ENCODE measurements at regions of chr5 and their contacts with region 1.

Region 1: DNA sequence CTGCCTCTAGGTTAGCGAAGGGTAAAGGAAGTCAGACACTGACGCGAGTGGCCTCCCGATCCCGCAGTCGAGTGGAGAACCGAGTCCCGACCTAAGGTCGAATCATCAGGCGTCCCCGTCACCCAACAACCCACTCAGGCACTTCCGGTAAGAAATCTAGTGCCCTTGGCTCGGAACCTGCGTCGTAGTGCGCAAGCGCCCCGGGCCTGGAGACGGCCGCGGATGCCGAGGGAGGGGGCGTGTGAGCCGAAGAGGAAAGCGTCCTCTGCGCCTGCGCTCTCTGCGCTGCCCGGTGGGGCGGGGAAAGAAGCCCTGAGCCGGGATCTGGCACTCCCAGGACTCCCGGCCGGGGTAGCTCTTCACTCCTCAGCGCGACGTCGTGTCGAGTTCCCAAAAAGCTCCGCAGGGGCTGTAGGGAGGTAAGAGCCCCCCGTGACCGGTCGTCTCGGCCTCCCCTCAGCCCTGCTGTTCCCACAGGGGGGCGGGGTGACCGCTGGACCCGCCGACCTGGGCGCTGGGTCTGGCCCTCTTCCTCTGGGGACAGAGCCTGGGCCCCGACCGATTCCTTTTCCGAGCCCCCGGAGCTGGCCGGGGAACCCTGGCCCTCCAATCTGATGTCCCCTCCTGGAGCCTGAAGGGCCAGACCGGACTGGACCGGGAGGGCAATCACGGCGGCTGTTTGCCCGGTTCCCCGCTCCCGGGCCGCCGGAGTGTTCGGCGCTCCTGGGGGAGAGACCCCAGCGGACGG is at the start of gene ZFYVE16:
- DNase-seq: peak; percentile 95
- ATAC-seq: peak; percentile 88
- H3K4me3 ChIP-seq: peak within 1 kb of the TSS; percentile 82 to 93 (median 89)
- H3K27ac ChIP-seq: peak within 1 kb of the TSS; percentile 94
- H3K4me1 ChIP-seq: peaks cover 28% of the 10 kb centered on the region
- H3K27me3 ChIP-seq: no peaks in the 10 kb centered on the region
- CTCF ChIP-seq: peak; percentile 55
- EP300 ChIP-seq: no peak
- POLR2A ChIP-seq: peak; percentile 87 to 96
- RAD21 ChIP-seq: peak; percentile 23; the same call in 1 of the 2 replicates
- total RNA-seq, gene ZFYVE16: 33.3 and 55.7 TPM in 2 replicates

Region 2: DNA sequence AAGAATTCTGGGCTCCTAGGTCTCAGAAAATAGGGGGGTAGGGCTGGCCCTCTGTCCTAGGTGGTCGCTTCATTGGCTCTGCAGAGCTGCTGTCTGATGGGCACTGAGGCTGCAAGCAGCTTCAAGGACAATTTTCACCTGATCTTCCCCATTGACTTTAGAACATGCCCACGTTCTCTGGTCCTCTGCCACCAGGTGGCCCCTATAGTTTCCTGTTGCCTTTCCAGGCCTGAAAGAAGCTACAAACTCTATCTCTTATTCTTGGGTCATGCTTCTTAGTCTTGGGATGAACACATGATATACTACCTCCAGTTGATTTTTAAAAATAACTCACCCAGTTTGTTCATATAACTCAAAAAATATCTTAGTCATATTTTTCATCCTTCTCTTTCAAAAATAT is 61.9 kb before region 1 on chr5:
- CTCF ChIA-PET with region 1: no interaction called
- POLR2A ChIA-PET with region 1: no interaction called
- in situ Hi-C with region 1: no loop called
- intact Hi-C with region 1: loop called (anchors 10 kb)
- DNase-seq: peak; percentile 44
- ATAC-seq: peak; percentile 90
- H3K4me3 ChIP-seq: no peak overlapping the region
- H3K27ac ChIP-seq: no peak overlapping the region
- H3K4me1 ChIP-seq: peaks cover 11% of the 10 kb centered on the region
- H3K27me3 ChIP-seq: peaks cover 0 to 2% of the 10 kb centered on the region in 2 experiments; a peak in 1 of 5 replicates
- CTCF ChIP-seq: peak; percentile 70
- EP300 ChIP-seq: no peak
- POLR2A ChIP-seq: no peak
- RAD21 ChIP-seq: peak; percentile 11; the same call in 1 of the 2 replicates

Region 3: GRCh38 chr5:80466669-80467485 is 59.0 kb after region 1 on chr5:
- CTCF ChIA-PET with region 1: no interaction called
- POLR2A ChIA-PET with region 1: interaction called, 14 read pairs
- in situ Hi-C with region 1: no loop called
- intact Hi-C with region 1: no loop called
- DNase-seq: peak; percentile 67
- ATAC-seq: peak; percentile 87
- H3K4me3 ChIP-seq: no peak overlapping the region
- H3K27ac ChIP-seq: peak overlapping the region; percentile 62
- H3K4me1 ChIP-seq: peaks cover 26% of the 10 kb centered on the region
- H3K27me3 ChIP-seq: no peaks in the 10 kb centered on the region
- CTCF ChIP-seq: no peak
- EP300 ChIP-seq: no peak
- POLR2A ChIP-seq: no peak
- RAD21 ChIP-seq: no peak

Region 4: GRCh38 chr5:80474929-80475328 is 67.0 kb after region 1 on chr5:
- CTCF ChIA-PET with region 1: no interaction called
- POLR2A ChIA-PET with region 1: no interaction called
- in situ Hi-C with region 1: no loop called
- intact Hi-C with region 1: loop called (anchors 5 kb)
- DNase-seq: peak; percentile 63
- ATAC-seq: peak; percentile 90
- H3K4me3 ChIP-seq: no peak overlapping the region
- H3K27ac ChIP-seq: peak overlapping the region; percentile 45
- H3K4me1 ChIP-seq: peaks cover 14% of the 10 kb centered on the region
- H3K27me3 ChIP-seq: no peaks in the 10 kb centered on the region; a peak in 1 of 5 replicates
- CTCF ChIP-seq: no peak
- EP300 ChIP-seq: peak in 1 of 2 experiments; percentile 30; a peak in 1 of 4 replicates
- POLR2A ChIP-seq: no peak
- RAD21 ChIP-seq: no peak

Region 5: DNA sequence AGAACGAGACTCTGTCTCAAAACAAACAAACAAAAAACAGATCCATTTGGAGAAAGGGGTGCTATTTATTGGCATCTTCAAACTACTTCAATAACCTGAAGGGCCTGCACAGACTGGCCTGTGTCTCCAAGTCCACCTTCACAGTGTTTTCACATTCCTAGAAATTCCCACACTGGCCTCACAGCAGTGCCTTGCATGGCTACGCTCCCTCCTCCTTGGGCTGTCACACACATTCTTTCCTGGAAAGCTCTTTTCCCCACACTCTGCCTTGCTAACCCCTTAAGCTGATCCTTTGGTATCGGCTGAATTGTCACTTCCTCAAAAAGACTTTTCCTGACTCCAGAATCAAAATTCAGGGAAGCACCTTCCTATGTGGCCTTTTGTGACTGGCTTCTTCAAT is 99.8 kb after region 1 on chr5:
- CTCF ChIA-PET with region 1: no interaction called
- POLR2A ChIA-PET with region 1: no interaction called
- in situ Hi-C with region 1: no loop called
- intact Hi-C with region 1: no loop called
- DNase-seq: no peak
- ATAC-seq: no peak
- H3K4me3 ChIP-seq: no peak overlapping the region
- H3K27ac ChIP-seq: no peak overlapping the region
- H3K4me1 ChIP-seq: no peaks in the 10 kb centered on the region
- H3K27me3 ChIP-seq: no peaks in the 10 kb centered on the region
- CTCF ChIP-seq: no peak
- EP300 ChIP-seq: no peak
- POLR2A ChIP-seq: no peak
- RAD21 ChIP-seq: no peak

Region 6: DNA sequence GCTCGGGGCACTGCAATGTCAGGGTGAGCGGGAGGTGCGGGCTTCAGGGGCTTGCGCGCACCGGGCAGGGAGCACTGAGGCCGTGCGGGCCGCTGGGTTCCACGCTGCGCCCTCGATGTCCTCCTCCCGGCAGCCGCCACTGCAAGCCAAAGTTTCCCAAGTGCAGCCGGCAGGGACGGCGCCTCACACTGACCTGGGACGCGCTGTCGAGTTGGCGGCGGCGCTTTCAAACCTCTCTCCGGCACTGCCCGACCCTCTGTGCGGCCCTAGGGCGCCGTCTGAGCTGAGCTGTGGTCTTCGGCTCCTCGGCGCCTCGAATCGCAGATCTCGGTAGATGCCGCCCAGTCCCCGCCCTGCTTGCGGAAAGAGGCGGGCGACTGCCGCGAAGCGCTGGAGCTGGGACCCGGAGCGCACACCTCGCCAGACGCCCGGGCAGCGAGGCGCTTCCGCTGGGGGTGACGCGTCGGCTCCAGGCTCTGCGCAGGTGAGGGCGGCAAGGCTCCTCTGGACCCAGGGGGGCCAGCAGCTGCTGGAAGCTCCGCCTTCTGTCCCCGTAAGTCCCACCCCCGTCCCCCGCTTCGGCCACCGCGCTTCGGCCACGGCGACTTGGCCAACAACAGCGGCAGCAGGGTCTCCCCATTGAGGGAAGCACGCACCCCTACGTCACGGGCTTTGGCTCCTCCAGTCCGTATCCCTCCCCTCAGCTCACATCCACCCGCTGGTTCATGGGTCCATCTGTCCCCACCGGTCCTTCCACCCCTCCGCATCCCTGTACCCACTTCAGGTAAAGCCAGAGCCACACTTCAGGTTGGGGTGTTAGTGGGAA is 162.3 kb after region 1 on chr5 and contains the start of gene ANKRD34B:
- CTCF ChIA-PET with region 1: no interaction called
- POLR2A ChIA-PET with region 1: no interaction called
- in situ Hi-C with region 1: no loop called
- intact Hi-C with region 1: loop called (anchors 5 kb)
- DNase-seq: no peak
- ATAC-seq: peak; percentile 80
- H3K4me3 ChIP-seq: peak within 1 kb of the TSS; percentile 38 to 72 (median 58)
- H3K27ac ChIP-seq: no peak within 1 kb of the TSS
- H3K4me1 ChIP-seq: peaks cover 10% of the 10 kb centered on the region; the same call in 1 of the 2 replicates
- H3K27me3 ChIP-seq: peaks cover 21 to 53% of the 10 kb centered on the region in 2 experiments
- CTCF ChIP-seq: no peak
- EP300 ChIP-seq: no peak
- POLR2A ChIP-seq: no peak
- RAD21 ChIP-seq: no peak
- total RNA-seq, gene ANKRD34B: 0.04 and 0.06 TPM in 2 replicates

Measured in HepG2 (cell line).